GM18951 (cell line): ENCODE measurements at regions of chr9 and their contacts with region 1.

Region 1: GRCh38 chr9:27033823-27034403 is 28.4 kb upstream of the LRRC19 start:
- POLR2A ChIP-seq: no peak

Region 2: DNA sequence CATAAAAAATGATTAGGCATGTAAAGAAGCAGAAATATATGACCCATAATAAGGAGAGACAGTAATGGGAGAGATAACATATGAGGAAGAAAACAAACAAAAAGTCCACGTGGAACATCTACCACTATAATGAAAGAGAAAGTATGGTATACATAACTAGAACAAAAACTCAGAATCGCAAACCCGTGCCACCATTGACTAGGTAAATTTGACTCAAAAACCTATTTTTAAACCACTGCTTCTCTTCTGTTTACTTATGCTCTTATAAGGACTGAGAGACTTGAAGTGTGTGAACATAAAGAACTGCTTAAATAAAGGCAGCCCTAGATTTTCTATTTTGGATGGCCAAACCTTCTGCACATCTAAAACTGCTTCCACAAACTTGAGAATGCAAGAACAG is 472.0 kb before region 1 on chr9:
- in situ Hi-C with region 1: no loop called
- POLR2A ChIP-seq: no peak

Region 3: GRCh38 chr9:27276193-27277030 is 242.5 kb after region 1 on chr9:
- in situ Hi-C with region 1: loop called (anchors 25 kb)
- POLR2A ChIP-seq: no peak

Region 4: GRCh38 chr9:27529316-27530278 is 495.7 kb after region 1 on chr9 and contains the start of gene MOB3B:
- in situ Hi-C with region 1: loop called (anchors 25 kb)
- POLR2A ChIP-seq: peak; percentile 24

Region 5: GRCh38 chr9:28317745-28318144 is 1283.8 kb after region 1 on chr9:
- in situ Hi-C with region 1: no loop called
- POLR2A ChIP-seq: no peak